ENCODE measurements at regions of chr7 and their contacts with region 1.

Region 1: DNA sequence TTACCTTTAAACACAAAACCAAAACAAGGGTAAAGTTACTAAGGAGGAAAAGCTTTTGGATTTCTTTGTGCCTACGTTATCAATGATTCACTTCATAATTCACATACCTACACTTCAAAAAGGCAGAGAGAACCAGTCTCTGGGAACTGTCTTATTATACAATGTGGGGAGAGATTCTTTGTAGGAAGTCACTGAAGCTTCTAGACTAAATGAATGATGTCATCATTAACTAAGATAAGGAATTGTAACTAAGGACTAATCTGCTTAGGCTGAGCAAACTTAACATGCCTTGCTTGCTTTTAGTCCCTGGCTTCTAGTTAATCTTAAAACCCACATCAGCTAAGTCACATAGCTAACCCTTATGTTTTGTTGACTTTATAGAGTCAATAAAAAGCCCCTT is 771.2 kb downstream of the NXPH1 start:
- DNase-seq: no peak
- ATAC-seq: no peak
- H3K4me3 ChIP-seq: no peak overlapping the region
- H3K4me3 Mint-ChIP-seq: no peak overlapping the region
- H3K27ac ChIP-seq: no peak overlapping the region
- H3K27ac Mint-ChIP-seq: no peak overlapping the region
- H3K4me1 ChIP-seq: no peaks in the 10 kb centered on the region
- H3K4me1 Mint-ChIP-seq: no peaks in the 10 kb centered on the region
- H3K27me3 ChIP-seq: no peaks in the 10 kb centered on the region
- H3K27me3 Mint-ChIP-seq: no peaks in the 10 kb centered on the region

Region 2: GRCh38 chr7:9264394-9264793 is 59.8 kb after region 1 on chr7:
- CTCF ChIA-PET with region 1: no interaction called
- POLR2A ChIA-PET with region 1: no interaction called
- intact Hi-C with region 1: loop called in 1 of 2 experiments (anchors 10 kb)
- DNase-seq: no peak
- ATAC-seq: no peak
- H3K4me3 ChIP-seq: no peak overlapping the region
- H3K4me3 Mint-ChIP-seq: no peak overlapping the region
- H3K27ac ChIP-seq: no peak overlapping the region
- H3K27ac Mint-ChIP-seq: no peak overlapping the region
- H3K4me1 ChIP-seq: no peaks in the 10 kb centered on the region
- H3K4me1 Mint-ChIP-seq: no peaks in the 10 kb centered on the region
- H3K27me3 ChIP-seq: no peaks in the 10 kb centered on the region
- H3K27me3 Mint-ChIP-seq: no peaks in the 10 kb centered on the region

Region 3: GRCh38 chr7:9407816-9408215 is 203.2 kb after region 1 on chr7:
- CTCF ChIA-PET with region 1: no interaction called
- POLR2A ChIA-PET with region 1: no interaction called
- intact Hi-C with region 1: no loop called
- DNase-seq: no peak
- ATAC-seq: no peak
- H3K4me3 ChIP-seq: no peak overlapping the region
- H3K4me3 Mint-ChIP-seq: no peak overlapping the region
- H3K27ac ChIP-seq: no peak overlapping the region
- H3K27ac Mint-ChIP-seq: no peak overlapping the region
- H3K4me1 ChIP-seq: no peaks in the 10 kb centered on the region
- H3K4me1 Mint-ChIP-seq: no peaks in the 10 kb centered on the region
- H3K27me3 ChIP-seq: no peaks in the 10 kb centered on the region
- H3K27me3 Mint-ChIP-seq: no peaks in the 10 kb centered on the region

Measured in naive thymus-derived CD4-positive, alpha-beta T cell (primary cell).